A549 (cell line): ENCODE measurements at regions of chr12 and their contacts with region 1.

Region 1: GRCh38 chr12:56117778-56118687 is at the start of gene ZC3H10:
- DNase-seq: peak; percentile 97 to 100
- ATAC-seq: peak; percentile 74 to 82
- H3K4me3 ChIP-seq: peak within 1 kb of the TSS; percentile 71
- H3K27ac ChIP-seq: peak within 1 kb of the TSS; percentile 91 to 96
- H3K4me1 ChIP-seq: peaks cover 20% of the 10 kb centered on the region
- CTCF ChIP-seq: peak; percentile 36
- EP300 ChIP-seq: no peak
- POLR2A ChIP-seq: peak; percentile 96
- RAD21 ChIP-seq: 0 out of 5 replicates have a peak, but pooled peaks of 1 of the 2 experiments have one; percentile 10
- polyA plus RNA-seq, gene ZC3H10: 2.1 and 2.7 TPM in 2 replicates

Region 2: GRCh38 chr12:56078990-56079664 is 38.9 kb before region 1 on chr12:
- CTCF ChIA-PET with region 1: interaction called, 8 read pairs
- POLR2A ChIA-PET with region 1: interaction called, 19 read pairs
- DNase-seq: peak; percentile 92 to 95
- ATAC-seq: peak; percentile 89 to 92
- H3K4me3 ChIP-seq: peak overlapping the region; percentile 73
- H3K27ac ChIP-seq: peak overlapping the region; percentile 87 to 96
- H3K4me1 ChIP-seq: peaks cover 30% of the 10 kb centered on the region
- CTCF ChIP-seq: peak; percentile 63
- EP300 ChIP-seq: no peak
- POLR2A ChIP-seq: peak; percentile 75
- RAD21 ChIP-seq: peak; percentile 51 to 58

Region 3: GRCh38 chr12:56127888-56128669 is 10.0 kb after region 1 on chr12 and contains the start of gene ESYT1:
- CTCF ChIA-PET with region 1: interaction called, 34 read pairs
- POLR2A ChIA-PET with region 1: interaction called, 40 read pairs
- DNase-seq: peak; percentile 99 to 100
- ATAC-seq: peak; percentile 83 to 95
- H3K4me3 ChIP-seq: peak within 1 kb of the TSS; percentile 76
- H3K27ac ChIP-seq: peak within 1 kb of the TSS; percentile 87 to 89
- H3K4me1 ChIP-seq: peaks cover 25% of the 10 kb centered on the region
- CTCF ChIP-seq: no peak
- EP300 ChIP-seq: no peak
- POLR2A ChIP-seq: peak; percentile 69
- RAD21 ChIP-seq: no peak
- polyA plus RNA-seq, gene ESYT1: 72.4 and 91.6 TPM in 2 replicates

Region 4: DNA sequence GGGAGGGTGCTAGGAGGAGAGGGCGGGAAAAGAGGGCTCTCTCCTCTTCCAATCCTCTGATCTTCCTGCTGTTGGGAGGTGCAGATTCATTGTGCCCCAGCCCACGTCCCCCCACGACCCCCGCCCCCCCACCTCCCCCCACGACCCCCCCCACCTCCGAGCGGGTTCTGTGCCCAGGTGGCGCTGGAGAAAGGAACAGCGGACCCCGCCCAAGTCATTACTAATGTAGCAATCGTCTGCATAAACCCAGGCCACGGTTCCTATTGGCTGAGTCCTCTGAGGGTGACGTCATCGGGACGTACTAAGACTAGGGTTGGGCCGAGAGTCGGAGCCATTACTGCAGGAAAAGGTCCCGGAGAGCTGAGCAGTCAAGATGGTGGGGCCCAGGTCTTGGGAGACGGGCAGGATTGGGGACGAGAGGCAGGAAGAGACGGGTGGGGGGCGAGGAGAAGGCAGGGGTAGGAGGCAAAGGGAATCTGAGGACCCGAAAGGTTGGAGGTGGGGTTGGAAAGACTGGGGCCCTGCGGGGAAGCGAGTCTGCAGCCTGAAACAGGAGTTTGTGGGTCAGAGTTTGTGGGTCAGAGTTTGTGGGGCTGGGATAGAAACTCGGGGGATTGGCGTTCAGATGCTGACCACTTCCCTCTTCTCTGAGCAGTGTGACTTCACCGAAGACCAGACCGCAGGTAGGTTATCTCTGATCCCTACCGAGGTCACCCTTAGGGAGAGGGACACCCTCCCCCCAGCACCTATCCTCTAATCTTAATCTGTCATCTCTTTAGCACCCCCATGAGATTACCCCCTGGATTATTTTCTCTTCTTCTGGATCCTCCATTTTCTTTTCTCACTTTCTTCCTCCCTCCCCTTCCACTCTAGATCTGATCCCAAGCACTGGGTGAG is 40.2 kb after region 1 on chr12 and contains the start of gene MYL6:
- CTCF ChIA-PET with region 1: interaction called, 32 read pairs
- POLR2A ChIA-PET with region 1: interaction called, 7 read pairs
- DNase-seq: peak; percentile 98 to 99
- ATAC-seq: peak; percentile 87 to 89
- H3K4me3 ChIP-seq: peak within 1 kb of the TSS; percentile 74
- H3K27ac ChIP-seq: peak within 1 kb of the TSS; percentile 90 to 97
- H3K4me1 ChIP-seq: peaks cover 39% of the 10 kb centered on the region
- CTCF ChIP-seq: no peak
- EP300 ChIP-seq: no peak
- POLR2A ChIP-seq: peak; percentile 99
- RAD21 ChIP-seq: no peak
- polyA plus RNA-seq, gene MYL6: 2,280 and 2,307 TPM in 2 replicates

Region 5: DNA sequence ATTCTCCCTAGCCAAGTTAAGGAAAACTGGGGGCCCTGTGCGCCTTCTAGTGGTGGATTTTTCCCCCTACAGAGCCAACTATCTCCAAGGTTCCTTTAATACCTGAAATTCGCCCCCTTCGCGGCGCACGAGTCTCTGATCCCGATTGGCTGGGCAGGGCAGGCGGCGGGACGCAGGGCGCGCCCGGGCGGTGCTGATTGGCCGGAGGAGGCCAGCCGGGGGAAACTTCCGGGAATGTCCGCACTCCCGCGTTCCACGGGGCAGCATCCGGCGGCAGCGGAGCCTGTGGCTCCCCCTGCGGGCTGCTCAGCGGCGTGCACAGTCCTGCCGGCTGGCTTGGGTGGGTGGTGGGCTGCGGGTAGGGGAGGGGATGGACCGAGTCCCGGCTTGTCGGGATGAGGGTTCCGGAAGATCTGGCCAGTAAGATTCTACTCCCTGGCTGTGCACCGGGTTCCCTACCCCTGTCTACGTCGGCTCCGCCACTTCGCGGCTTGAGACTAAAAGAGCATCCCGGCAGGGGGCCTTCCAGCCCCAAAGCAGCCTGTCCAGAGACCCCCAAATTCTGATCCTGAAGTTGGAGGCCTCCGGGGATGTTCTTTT is 106.2 kb after region 1 on chr12 and contains the start of gene NABP2:
- CTCF ChIA-PET with region 1: interaction called, 26 read pairs
- POLR2A ChIA-PET with region 1: interaction called, 16 read pairs
- DNase-seq: peak; percentile 99
- ATAC-seq: peak; percentile 84 to 89
- H3K4me3 ChIP-seq: peak within 1 kb of the TSS; percentile 66
- H3K27ac ChIP-seq: peak within 1 kb of the TSS; percentile 80 to 94
- H3K4me1 ChIP-seq: peaks cover 26% of the 10 kb centered on the region
- CTCF ChIP-seq: peak; percentile 95
- EP300 ChIP-seq: no peak
- POLR2A ChIP-seq: peak; percentile 61
- RAD21 ChIP-seq: peak; percentile 57 to 73
- polyA plus RNA-seq, gene NABP2: 86.1 and 86.7 TPM in 2 replicates

Region 6: DNA sequence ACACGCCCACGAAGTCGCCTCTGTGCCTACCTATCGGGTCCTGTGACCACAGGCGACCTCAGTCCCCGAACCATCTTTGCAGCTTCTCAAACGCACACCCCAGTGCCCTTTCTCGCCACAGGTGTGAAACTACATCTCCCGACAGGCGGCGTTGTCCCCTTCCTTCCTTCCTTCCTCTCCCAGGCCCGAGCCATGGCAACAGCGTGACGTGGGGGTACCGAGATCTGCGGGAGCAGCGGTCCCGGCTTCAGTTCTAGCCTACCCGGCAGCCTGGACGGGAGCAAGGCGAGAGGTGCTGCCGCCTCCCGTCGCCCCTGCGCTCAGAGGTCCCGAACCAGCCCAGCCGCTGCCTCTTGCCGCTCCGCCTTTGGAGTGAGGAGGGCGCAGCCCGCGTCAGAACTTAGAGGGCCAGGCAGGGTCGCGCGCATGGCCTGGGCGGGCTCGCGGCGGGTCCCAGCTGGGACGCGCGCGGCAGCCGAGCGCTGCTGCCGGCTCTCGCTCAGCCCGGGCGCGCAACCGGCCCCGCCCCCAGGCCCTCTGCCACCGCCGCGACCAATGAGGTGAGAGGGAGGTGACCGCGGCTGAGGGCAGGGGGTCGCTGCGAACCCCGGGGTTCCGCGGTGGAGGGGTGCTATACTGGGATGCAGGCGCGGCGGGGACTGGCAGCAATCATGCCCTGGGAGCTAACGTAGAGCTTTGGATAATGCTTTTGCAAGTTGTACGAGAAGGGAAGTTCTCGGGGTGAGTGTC is 148.8 kb after region 1 on chr12 and contains the start of gene COQ10A:
- CTCF ChIA-PET with region 1: interaction called, 11 read pairs
- POLR2A ChIA-PET with region 1: no interaction called
- DNase-seq: peak; percentile 94 to 98
- ATAC-seq: peak; percentile 91 to 94
- H3K4me3 ChIP-seq: peak within 1 kb of the TSS; percentile 47
- H3K27ac ChIP-seq: peak within 1 kb of the TSS; percentile 77 to 93
- H3K4me1 ChIP-seq: peaks cover 20% of the 10 kb centered on the region
- CTCF ChIP-seq: peak; percentile 51
- EP300 ChIP-seq: no peak
- POLR2A ChIP-seq: peak; percentile 96
- RAD21 ChIP-seq: peak; percentile 36 to 42; a peak in 3 of 5 replicates
- polyA plus RNA-seq, gene COQ10A: 40.9 and 41.2 TPM in 2 replicates